ENCODE measurements at regions of chr10 and their contacts with region 1.

Region 1: GRCh38 chr10:64115913-64116643 is 594.9 kb downstream of the REEP3 start:
- DNase-seq: peak; percentile 5 to 32 (median 21)
- H3K4me3 ChIP-seq: no peak overlapping the region
- H3K27ac ChIP-seq: no peak overlapping the region
- H3K4me1 ChIP-seq: peaks cover 0 to 18% (median 4%) of the 10 kb centered on the region in 4 experiments
- H3K27me3 ChIP-seq: no peaks in the 10 kb centered on the region

Region 2: GRCh38 chr10:64101606-64102263 is 14.3 kb before region 1 on chr10:
- CTCF ChIA-PET with region 1: interaction called, 19 read pairs
- POLR2A ChIA-PET with region 1: no interaction called
- DNase-seq: no peak
- H3K4me3 ChIP-seq: no peak overlapping the region
- H3K27ac ChIP-seq: no peak overlapping the region
- H3K4me1 ChIP-seq: no peaks in the 10 kb centered on the region
- H3K27me3 ChIP-seq: peaks cover 0 to 4% (median 0%) of the 10 kb centered on the region in 5 experiments

Measured in common myeloid progenitor, CD34-positive (primary cell).